A549 (cell line): ENCODE measurements at regions of chr5 and their contacts with region 1.

Region 1: GRCh38 chr5:148928141-148928540 is 101.7 kb downstream of the ADRB2 start:
- DNase-seq: no peak
- ATAC-seq: no peak
- H3K4me3 ChIP-seq: no peak overlapping the region
- H3K27ac ChIP-seq: no peak overlapping the region
- H3K4me1 ChIP-seq: no peaks in the 10 kb centered on the region
- CTCF ChIP-seq: no peak
- EP300 ChIP-seq: no peak
- POLR2A ChIP-seq: no peak
- RAD21 ChIP-seq: no peak

Region 2: DNA sequence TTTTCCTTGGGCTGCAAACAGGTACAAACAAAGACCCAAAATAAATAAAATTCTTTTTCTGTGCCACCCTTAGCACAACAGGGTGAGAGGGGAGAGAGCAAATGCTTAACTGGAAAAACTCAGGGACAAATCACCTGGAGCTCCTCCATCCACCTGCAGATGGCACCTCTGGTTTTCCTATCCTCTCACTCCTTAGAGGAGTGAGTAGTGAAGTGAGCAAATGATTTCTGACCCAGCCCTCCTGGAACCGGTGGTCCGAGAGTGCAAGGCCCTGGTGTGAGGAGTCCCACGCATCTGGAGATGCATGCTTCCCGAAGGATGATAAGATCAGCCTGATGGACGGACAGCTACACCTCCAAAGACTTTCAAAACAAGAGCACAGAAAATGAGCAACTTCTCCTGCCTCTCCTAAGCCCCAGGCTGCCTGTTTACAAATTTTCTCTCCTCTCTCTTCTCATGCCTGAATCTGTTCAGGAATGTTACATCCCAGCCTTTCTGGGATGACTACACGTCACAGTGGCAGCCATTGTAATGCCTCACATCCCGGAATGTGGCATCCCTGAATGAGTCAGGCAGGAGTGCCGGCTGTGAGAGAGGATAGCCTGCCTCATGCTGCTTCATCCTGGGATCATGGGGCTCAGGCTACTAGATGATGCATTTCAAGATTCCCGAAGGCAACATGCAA is 15.3 kb before region 1 on chr5:
- CTCF ChIA-PET with region 1: interaction called, 12 read pairs
- POLR2A ChIA-PET with region 1: no interaction called
- DNase-seq: peak; percentile 82
- ATAC-seq: peak; percentile 91 to 96
- H3K4me3 ChIP-seq: no peak overlapping the region
- H3K27ac ChIP-seq: peak overlapping the region; percentile 43 to 59; a peak in 5 of 6 replicates
- H3K4me1 ChIP-seq: peaks cover 37% of the 10 kb centered on the region
- CTCF ChIP-seq: peak; percentile 52
- EP300 ChIP-seq: peak in 1 of 2 experiments; percentile 29; a peak in 1 of 5 replicates
- POLR2A ChIP-seq: no peak
- RAD21 ChIP-seq: peak; percentile 65 to 66

Region 3: DNA sequence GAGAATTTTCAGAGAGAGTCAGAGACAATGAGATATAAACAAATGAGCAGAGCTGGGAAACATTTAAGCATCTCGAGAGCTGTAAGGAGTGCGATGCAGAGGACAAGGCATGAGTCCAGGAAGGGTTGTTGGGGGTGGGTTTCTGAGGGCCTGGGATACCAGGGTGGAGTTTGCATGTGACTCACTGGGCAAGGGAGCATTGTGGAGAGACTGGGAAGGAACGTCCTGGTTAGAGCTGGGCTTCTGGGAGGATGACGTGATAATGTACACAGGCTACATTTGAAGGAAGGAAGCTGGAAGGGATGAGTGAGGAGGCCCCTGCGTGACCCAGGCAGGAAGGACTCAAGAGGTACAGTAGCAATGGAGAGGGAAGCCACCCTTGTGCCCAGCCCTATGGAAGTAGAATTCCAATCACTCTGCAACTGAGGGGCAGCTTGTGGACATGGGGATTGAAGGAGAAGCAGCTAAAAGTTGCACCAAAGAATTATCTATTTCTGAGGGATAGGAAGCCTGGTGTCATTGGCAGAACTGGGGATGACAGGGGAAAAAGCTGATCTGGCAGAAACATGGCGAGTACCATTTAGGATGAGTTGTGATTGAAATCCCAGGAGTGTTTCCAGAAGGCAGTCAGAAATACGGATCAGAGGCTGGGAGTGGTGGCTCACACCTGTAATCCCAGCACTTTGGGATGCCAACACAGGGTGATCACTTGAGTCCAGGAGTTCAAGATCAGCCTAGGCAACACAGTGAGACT is 284.2 kb after region 1 on chr5:
- CTCF ChIA-PET with region 1: no interaction called
- POLR2A ChIA-PET with region 1: no interaction called
- DNase-seq: no peak
- ATAC-seq: no peak
- H3K4me3 ChIP-seq: no peak overlapping the region
- H3K27ac ChIP-seq: no peak overlapping the region
- H3K4me1 ChIP-seq: no peaks in the 10 kb centered on the region
- CTCF ChIP-seq: no peak
- EP300 ChIP-seq: no peak
- POLR2A ChIP-seq: no peak
- RAD21 ChIP-seq: no peak